Body of pancreas (tissue), 4 donors: ENCODE measurements at regions of chr12 and their contacts with region 1.

Region 1: GRCh38 chr12:16359512-16360491 is 12.4 kb downstream of the MGST1 start:
- DNase-seq: peak; percentile 50 to 78 (median 73)
- ATAC-seq: peak; percentile 70
- H3K4me3 ChIP-seq: no peak overlapping the region
- H3K27ac ChIP-seq: no peak overlapping the region
- H3K4me1 ChIP-seq: no peaks in the 10 kb centered on the region
- H3K27me3 ChIP-seq: no peaks in the 10 kb centered on the region
- CTCF ChIP-seq: peak; percentile 49 to 68 (median 65)
- POLR2A ChIP-seq: no peak

Region 2: GRCh38 chr12:16165506-16165905 is 194.3 kb before region 1 on chr12:
- intact Hi-C with region 1: loop called (anchors 10 kb)
- DNase-seq: peak; percentile 20 to 55 (median 50)
- ATAC-seq: peak; percentile 50
- H3K4me3 ChIP-seq: no peak overlapping the region
- H3K27ac ChIP-seq: no peak overlapping the region
- H3K4me1 ChIP-seq: no peaks in the 10 kb centered on the region
- H3K27me3 ChIP-seq: no peaks in the 10 kb centered on the region
- CTCF ChIP-seq: peak in 6 of 7 experiments; percentile 15 to 71 (median 46)
- POLR2A ChIP-seq: no peak

Region 3: DNA sequence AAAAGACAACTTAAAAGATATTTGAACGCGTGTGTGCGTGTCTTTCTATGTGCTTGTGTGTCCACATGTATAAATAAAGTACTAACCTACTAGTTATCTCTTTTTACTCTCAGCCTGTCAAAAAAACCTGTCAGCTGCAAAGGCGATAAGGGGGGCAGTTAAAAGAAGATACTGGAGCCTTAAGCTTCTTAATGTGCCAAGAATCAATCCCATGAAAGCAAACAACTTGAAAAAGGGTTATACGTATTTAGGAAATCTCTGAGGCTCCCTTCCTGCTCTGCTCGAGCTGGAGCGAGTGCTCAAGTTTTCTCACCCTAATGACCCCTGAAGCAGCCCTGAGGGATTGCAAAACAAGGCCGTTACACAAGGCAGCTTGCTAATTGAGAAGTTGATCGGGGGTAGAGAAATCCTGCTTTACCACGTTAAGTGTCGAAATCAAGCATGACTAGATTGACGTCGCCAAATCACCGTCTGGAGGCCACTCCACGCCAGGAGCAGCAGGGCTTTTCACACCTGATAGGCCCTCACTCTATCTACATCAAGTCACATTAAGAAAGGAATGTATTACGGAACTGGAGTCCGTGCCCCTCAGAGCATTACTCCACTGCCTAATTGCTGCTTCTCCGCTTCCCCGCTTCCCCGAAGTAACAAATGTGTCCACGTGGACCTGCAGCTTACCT is 213.7 kb after region 1 on chr12:
- intact Hi-C with region 1: no loop called
- DNase-seq: peak; percentile 71 to 86 (median 76)
- ATAC-seq: peak; percentile 91
- H3K4me3 ChIP-seq: no peak overlapping the region
- H3K27ac ChIP-seq: peak overlapping the region; percentile 41 to 81 (median 78)
- H3K4me1 ChIP-seq: peaks cover 24% of the 10 kb centered on the region
- H3K27me3 ChIP-seq: no peaks in the 10 kb centered on the region
- CTCF ChIP-seq: no peak
- POLR2A ChIP-seq: peak in 2 of 3 donors; percentile 57 to 66